ENCODE measurements at regions of chr5 and their contacts with region 1.

Region 1: GRCh38 chr5:139968547-139969261 is 74.4 kb downstream of the NRG2 start:
- DNase-seq: peak; percentile 87
- ATAC-seq: peak; percentile 98
- H3K4me3 ChIP-seq: no peak overlapping the region
- H3K27ac ChIP-seq: no peak overlapping the region
- H3K4me1 ChIP-seq: no peaks in the 10 kb centered on the region
- H3K27me3 ChIP-seq: no peaks in the 10 kb centered on the region
- CTCF ChIP-seq: peak; percentile 99

Region 2: GRCh38 chr5:139660923-139661814 is 307.5 kb before region 1 on chr5:
- CTCF ChIA-PET with region 1: no interaction called
- POLR2A ChIA-PET with region 1: no interaction called
- intact Hi-C with region 1: no loop called
- DNase-seq: peak; percentile 81
- ATAC-seq: peak; percentile 85
- H3K4me3 ChIP-seq: peak overlapping the region; percentile 47; the same call in 1 of the 2 replicates
- H3K27ac ChIP-seq: peak overlapping the region; percentile 64
- H3K4me1 ChIP-seq: peaks cover 31% of the 10 kb centered on the region
- H3K27me3 ChIP-seq: no peaks in the 10 kb centered on the region
- CTCF ChIP-seq: no peak

Region 3: GRCh38 chr5:139844472-139845145 is 124.1 kb before region 1 on chr5:
- CTCF ChIA-PET with region 1: interaction called, 4 read pairs
- POLR2A ChIA-PET with region 1: no interaction called
- intact Hi-C with region 1: loop called (anchors 2 kb)
- DNase-seq: peak; percentile 74
- ATAC-seq: peak; percentile 92
- H3K4me3 ChIP-seq: no peak overlapping the region
- H3K27ac ChIP-seq: no peak overlapping the region
- H3K4me1 ChIP-seq: no peaks in the 10 kb centered on the region
- H3K27me3 ChIP-seq: no peaks in the 10 kb centered on the region
- CTCF ChIP-seq: peak; percentile 90

Region 4: DNA sequence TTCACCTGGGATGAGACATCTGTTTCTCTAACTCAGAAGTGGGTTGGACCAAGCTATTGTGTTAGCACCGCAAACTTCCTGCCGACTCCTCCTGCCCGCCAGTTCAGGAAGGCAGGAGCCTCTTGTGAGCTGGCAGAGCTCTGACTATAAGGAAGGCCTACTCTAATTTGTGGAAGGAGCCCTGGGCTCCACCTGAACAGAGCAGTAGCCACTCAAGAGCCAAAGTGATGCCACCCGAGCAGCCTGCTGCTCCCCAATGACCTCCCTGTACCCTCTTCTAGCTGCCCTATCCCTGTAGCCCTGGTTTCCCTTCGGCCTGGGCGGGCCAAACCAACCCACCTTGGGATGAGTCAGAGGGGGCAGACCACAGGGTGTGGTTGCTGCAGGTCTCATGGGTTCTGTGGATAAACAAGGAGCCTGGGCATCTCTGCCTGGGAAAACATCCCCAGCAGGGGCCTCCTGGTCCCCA is 91.5 kb before region 1 on chr5:
- CTCF ChIA-PET with region 1: interaction called, 5 read pairs
- POLR2A ChIA-PET with region 1: no interaction called
- intact Hi-C with region 1: loop called (anchors 1 kb)
- DNase-seq: peak; percentile 90
- ATAC-seq: peak; percentile 92
- H3K4me3 ChIP-seq: peak overlapping the region; percentile 52
- H3K27ac ChIP-seq: peak overlapping the region; percentile 92
- H3K4me1 ChIP-seq: peaks cover 25% of the 10 kb centered on the region
- H3K27me3 ChIP-seq: no peaks in the 10 kb centered on the region
- CTCF ChIP-seq: no peak

Region 5: GRCh38 chr5:139985733-139986132 is 17.0 kb after region 1 on chr5:
- CTCF ChIA-PET with region 1: interaction called, 12 read pairs
- POLR2A ChIA-PET with region 1: no interaction called
- intact Hi-C with region 1: no loop called
- DNase-seq: peak; percentile 94
- ATAC-seq: peak; percentile 92
- H3K4me3 ChIP-seq: peak overlapping the region; percentile 27; the same call in 1 of the 2 replicates
- H3K27ac ChIP-seq: peak overlapping the region; percentile 92
- H3K4me1 ChIP-seq: peaks cover 31% of the 10 kb centered on the region
- H3K27me3 ChIP-seq: no peaks in the 10 kb centered on the region
- CTCF ChIP-seq: no peak

Region 6: GRCh38 chr5:140042643-140043500 is 74.2 kb after region 1 on chr5 and contains the start of gene NRG2:
- CTCF ChIA-PET with region 1: interaction called, 10 read pairs
- POLR2A ChIA-PET with region 1: no interaction called
- intact Hi-C with region 1: loop called (anchors 5 kb)
- DNase-seq: peak; percentile 53
- ATAC-seq: peak; percentile 58
- H3K4me3 ChIP-seq: peak within 1 kb of the TSS; percentile 86
- H3K27ac ChIP-seq: 0 out of 2 replicates have a peak within 1 kb of the TSS, but pooled peaks have one; percentile 16
- H3K4me1 ChIP-seq: peaks cover 25% of the 10 kb centered on the region
- H3K27me3 ChIP-seq: no peaks in the 10 kb centered on the region
- CTCF ChIP-seq: peak; percentile 56
- total RNA-seq, gene NRG2: 1.8 and 3.2 TPM in 2 replicates

Region 7: DNA sequence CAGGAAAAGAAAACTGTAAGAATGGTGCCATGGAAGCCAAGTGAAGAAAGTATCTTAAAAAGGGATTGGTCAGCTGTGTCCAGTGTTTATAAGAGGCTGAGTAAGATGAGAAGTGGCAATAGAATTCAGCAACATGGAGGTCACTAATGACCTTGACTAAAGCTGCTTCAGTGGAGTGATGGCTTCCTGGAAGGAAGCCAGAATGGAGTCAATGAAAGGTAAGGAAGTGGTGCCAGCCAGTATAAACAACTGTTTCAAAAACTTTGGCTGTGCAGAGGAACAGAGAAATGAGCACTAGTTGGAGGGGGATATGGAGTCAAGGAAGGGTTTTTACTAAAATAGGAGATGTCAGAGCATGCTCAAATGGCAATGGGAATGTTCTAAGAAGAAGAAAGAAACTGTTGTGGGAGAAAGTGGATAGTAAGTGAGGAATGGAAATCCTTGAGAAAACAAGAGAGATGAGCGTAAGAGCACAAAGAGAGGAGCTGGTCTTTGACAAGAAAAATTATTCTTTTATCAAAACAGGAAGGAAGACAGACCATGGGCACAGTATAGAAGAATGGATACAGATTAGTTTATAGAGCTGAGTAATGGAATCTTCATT is 85.5 kb after region 1 on chr5:
- CTCF ChIA-PET with region 1: no interaction called
- POLR2A ChIA-PET with region 1: no interaction called
- intact Hi-C with region 1: no loop called
- DNase-seq: no peak
- ATAC-seq: no peak
- H3K4me3 ChIP-seq: no peak overlapping the region
- H3K27ac ChIP-seq: no peak overlapping the region
- H3K4me1 ChIP-seq: no peaks in the 10 kb centered on the region
- H3K27me3 ChIP-seq: peaks cover 36% of the 10 kb centered on the region
- CTCF ChIP-seq: no peak

Region 8: DNA sequence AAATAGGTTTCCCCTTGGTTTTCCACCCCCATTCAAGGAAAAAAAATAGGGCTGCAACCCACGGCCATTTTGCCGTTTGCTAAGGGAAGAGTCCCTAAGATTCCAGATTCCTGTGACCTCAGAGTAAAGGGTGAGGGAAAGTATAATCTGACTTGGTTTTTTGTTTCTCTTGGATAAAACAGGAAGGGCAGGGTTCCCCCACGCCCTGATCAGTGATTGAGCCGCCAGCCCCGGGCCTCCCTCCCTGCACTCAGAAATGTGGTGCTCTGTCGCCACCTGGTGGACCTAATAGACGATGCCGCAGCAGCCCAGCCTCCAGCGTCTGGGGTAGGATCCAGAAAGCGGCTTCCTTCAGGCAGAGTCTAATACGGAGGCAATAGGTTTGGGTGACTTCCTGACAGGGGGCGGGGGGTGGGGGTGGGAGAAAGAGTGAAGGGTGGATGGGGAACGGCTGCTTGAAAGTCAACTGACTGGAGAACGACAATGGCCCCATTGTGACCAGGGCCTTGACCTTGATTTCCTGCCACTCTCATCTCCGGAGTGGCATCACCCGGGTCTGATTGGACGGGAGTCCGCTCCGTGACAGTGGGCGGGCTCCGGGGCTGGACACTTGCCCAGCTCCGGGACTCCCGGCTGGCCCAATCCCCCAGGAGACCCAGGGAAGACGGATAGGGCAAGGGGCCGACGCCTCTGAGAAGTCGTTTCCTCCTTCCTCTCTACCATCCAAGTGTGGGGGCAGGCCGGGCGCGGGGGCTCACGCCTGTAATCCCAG is 188.5 kb after region 1 on chr5:
- CTCF ChIA-PET with region 1: no interaction called
- POLR2A ChIA-PET with region 1: no interaction called
- intact Hi-C with region 1: loop called (anchors 1 kb)
- DNase-seq: peak; percentile 91
- ATAC-seq: peak; percentile 99
- H3K4me3 ChIP-seq: peak overlapping the region; percentile 59
- H3K27ac ChIP-seq: no peak overlapping the region
- H3K4me1 ChIP-seq: peaks cover 5% of the 10 kb centered on the region
- H3K27me3 ChIP-seq: no peaks in the 10 kb centered on the region
- CTCF ChIP-seq: peak; percentile 90

Measured in PC-3 (cell line).